Mammary epithelial cell (primary cell): ENCODE measurements at regions of chr22 and their contacts with region 1.

Region 1: GRCh38 chr22:20495861-20496681 is 476 bp upstream of the KLHL22 start:
- DNase-seq: peak; percentile 92
- H3K4me3 ChIP-seq: peak overlapping the region; percentile 49 to 60 (median 54)
- H3K27ac ChIP-seq: peak overlapping the region; percentile 77
- H3K4me1 ChIP-seq: peaks cover 16% of the 10 kb centered on the region
- H3K27me3 ChIP-seq: no peaks in the 10 kb centered on the region
- CTCF ChIP-seq: peak; percentile 81 to 86

Region 2: DNA sequence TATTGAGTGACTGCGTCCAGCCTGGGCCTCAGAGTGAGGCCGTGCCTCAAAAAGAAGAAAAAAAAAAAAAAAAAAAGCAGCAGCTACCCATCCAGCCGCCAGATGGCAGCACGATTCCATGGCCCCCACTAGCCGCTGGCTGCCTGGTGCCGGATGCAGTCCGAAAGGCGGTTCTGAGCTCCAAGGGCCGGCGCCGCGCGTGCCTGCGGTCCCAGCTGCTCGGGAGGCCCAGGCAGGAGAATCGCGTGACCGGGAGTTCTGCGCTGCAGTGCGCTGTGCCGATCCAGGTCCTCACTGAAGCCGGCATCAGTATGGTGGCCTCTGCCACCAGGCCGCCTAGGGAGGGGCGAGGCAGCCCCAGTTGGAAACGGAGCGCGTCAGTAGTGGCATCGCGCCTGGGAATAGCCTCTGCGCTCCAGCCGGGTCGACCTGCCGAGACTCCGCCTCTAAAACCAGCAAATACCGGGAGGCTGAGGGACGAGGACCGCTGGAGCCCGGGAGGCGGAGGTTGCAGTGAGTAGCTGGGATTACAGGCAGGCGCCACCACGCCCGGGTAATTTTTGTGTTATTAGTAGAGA is 77.8 kb before region 1 on chr22:
- CTCF ChIA-PET with region 1: no interaction called
- dilution Hi-C with region 1: no loop called
- in situ Hi-C with region 1: no loop called
- intact Hi-C with region 1: loop called (anchors 1 kb)
- DNase-seq: peak; percentile 49
- H3K4me3 ChIP-seq: peak overlapping the region in 2 of 3 experiments; percentile 51 to 60
- H3K27ac ChIP-seq: no peak overlapping the region
- H3K4me1 ChIP-seq: peaks cover 5% of the 10 kb centered on the region
- H3K27me3 ChIP-seq: no peaks in the 10 kb centered on the region
- CTCF ChIP-seq: peak; percentile 61 to 87

Region 3: GRCh38 chr22:20531315-20532201 is 35.5 kb after region 1 on chr22:
- CTCF ChIA-PET with region 1: interaction called, 8 read pairs
- dilution Hi-C with region 1: no loop called
- in situ Hi-C with region 1: no loop called
- intact Hi-C with region 1: loop called (anchors 1 kb)
- DNase-seq: peak; percentile 95
- H3K4me3 ChIP-seq: no peak overlapping the region
- H3K27ac ChIP-seq: peak overlapping the region; percentile 98
- H3K4me1 ChIP-seq: peaks cover 58% of the 10 kb centered on the region
- H3K27me3 ChIP-seq: no peaks in the 10 kb centered on the region
- CTCF ChIP-seq: no peak